ENCODE measurements at regions of chr12 and their contacts with region 1.

Region 1: GRCh38 chr12:93378373-93379325 is 924 bp downstream of the NUDT4 start:
- DNase-seq: peak; percentile 75
- H3K4me3 Mint-ChIP-seq: peak overlapping the region; percentile 100
- H3K27ac Mint-ChIP-seq: peak overlapping the region; percentile 100
- H3K4me1 Mint-ChIP-seq: peaks cover 45% of the 10 kb centered on the region
- H3K27me3 Mint-ChIP-seq: no peaks in the 10 kb centered on the region

Region 2: GRCh38 chr12:92943482-92944250 is 435.0 kb before region 1 on chr12:
- CTCF ChIA-PET with region 1: no interaction called
- DNase-seq: no peak
- H3K4me3 Mint-ChIP-seq: no peak overlapping the region
- H3K27ac Mint-ChIP-seq: no peak overlapping the region
- H3K4me1 Mint-ChIP-seq: no peaks in the 10 kb centered on the region
- H3K27me3 Mint-ChIP-seq: no peaks in the 10 kb centered on the region

Region 3: DNA sequence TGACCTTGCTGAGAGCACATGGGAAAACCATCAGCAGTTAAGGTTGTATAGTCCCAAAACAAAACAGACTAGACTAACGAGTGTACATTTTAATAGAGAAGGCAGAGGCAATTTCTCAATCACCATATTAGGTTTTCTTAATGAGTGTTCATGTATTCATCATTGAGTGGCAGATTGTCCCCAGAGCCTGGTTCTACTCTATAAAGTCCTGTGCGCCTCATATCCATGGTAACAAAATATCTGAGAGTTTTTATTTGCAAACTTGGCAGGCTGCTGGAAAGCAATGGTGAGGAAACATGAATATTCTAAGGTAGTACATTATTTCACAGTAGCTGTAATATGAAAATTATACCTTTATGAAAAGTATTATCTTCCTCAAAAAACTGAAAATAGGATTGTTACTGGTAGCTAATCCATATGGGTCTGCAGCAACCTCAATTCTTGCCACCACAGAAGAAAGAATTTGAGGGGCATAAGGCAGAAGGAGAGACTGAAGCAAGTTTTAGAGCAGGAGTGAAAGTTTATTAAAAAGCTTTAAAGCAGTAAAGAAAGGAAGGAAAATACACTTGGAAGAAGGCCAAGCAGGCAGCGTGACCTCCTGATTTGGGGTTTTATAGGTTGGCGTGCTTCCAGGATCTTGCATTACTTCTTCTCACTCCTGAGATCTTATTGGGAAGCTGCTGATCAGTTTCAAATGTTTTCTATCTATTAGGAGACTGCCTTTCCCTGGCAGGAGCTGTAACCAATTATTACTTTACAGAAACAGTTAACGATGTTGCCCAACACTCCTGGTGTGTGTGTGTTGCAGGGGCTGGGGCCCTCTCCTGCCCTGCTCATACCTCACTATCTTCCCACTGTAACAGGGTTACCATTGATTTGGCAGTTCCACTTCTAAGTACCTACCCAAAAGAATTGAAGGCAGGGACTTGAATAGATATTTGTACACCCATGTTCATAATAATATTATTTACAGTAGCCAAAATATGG is 154.9 kb before region 1 on chr12:
- CTCF ChIA-PET with region 1: no interaction called
- DNase-seq: no peak
- H3K4me3 Mint-ChIP-seq: no peak overlapping the region
- H3K27ac Mint-ChIP-seq: no peak overlapping the region
- H3K4me1 Mint-ChIP-seq: peaks cover 6% of the 10 kb centered on the region
- H3K27me3 Mint-ChIP-seq: no peaks in the 10 kb centered on the region

Region 4: DNA sequence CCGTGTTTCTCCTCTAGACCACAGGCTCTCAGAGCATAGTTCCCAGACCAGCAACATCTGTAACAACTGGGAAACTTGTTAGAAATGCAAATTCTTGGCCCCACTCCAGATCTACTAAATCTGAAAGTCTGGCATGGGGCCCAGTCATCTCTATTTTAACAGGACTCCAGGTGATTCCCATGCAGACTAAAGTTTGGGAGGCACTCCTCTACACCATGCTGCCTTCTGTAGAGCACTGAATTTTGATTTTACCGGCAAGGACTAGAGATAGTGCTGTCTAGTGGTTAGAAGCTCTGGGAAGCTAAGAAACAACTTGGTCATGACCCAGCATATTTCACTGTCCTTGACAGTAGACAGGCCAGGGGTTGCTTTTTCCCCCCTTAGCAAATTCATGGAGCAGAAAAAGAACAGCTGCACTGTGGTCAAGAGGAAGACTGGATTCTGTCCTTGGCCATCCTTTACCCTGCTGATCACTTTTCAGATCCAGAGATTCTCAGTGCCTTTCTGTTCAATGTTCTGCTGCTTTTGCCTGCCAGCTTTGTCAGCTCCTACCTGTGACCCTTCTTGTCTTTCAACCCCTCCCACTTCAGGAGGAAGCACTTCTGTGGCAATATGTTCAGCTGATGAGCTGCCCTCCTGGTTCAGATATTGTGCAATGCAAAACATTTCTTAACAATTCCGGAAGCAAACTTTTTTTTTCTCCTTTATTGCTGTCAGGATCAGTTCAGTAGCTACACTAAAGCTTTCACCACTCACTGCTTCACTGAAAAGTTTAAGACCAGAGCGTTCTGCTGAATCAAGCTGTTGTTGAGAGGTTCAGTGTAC is 134.7 kb before region 1 on chr12:
- CTCF ChIA-PET with region 1: interaction called, 15 read pairs
- DNase-seq: peak; percentile 37
- H3K4me3 Mint-ChIP-seq: peak overlapping the region; percentile 46
- H3K27ac Mint-ChIP-seq: peak overlapping the region; percentile 93
- H3K4me1 Mint-ChIP-seq: peaks cover 52% of the 10 kb centered on the region
- H3K27me3 Mint-ChIP-seq: no peaks in the 10 kb centered on the region

Region 5: DNA sequence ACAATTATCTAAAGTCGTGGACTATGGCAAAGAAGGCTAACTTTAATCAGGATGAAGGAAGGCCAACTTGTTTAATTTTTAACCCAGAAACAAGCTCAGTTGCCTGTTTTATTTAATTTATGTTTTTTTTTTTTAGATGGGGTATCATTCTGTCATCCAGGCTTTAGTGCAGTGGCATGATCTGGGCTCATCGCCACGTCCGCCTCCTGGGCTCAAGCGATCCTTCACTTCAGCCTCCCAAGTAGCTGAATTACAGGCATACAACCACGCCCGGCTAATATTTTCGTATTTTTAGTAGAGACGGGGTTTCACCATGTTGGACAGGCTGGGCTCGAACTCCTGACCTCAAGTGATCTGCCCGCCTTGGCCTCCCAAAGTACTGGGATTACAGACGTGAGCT is 18.8 kb after region 1 on chr12:
- CTCF ChIA-PET with region 1: interaction called, 26 read pairs
- DNase-seq: no peak
- H3K4me3 Mint-ChIP-seq: no peak overlapping the region
- H3K27ac Mint-ChIP-seq: no peak overlapping the region
- H3K4me1 Mint-ChIP-seq: no peaks in the 10 kb centered on the region
- H3K27me3 Mint-ChIP-seq: no peaks in the 10 kb centered on the region

Measured in activated naive CD4-positive, alpha-beta T cell treated with anti-CD3 and anti-CD28 coated beads, Interleukin-2, amount 10 ng/mL, durations not matched to agents 7 days and 5 days (primary cell).